Naive thymus-derived CD4-positive, alpha-beta T cell (primary cell): ENCODE measurements at regions of chr19 and their contacts with region 1.

Region 1: GRCh38 chr19:1241417-1242095 is at the start of gene ATP5F1D:
- DNase-seq: peak; percentile 76 to 91 (median 85)
- ATAC-seq: peak; percentile 74
- H3K4me3 ChIP-seq: peak within 1 kb of the TSS; percentile 57
- H3K4me3 Mint-ChIP-seq: peak within 1 kb of the TSS; percentile 86 to 96 (median 90)
- H3K27ac ChIP-seq: peak within 1 kb of the TSS; percentile 82
- H3K27ac Mint-ChIP-seq: peak within 1 kb of the TSS; percentile 81 to 96 (median 93)
- H3K4me1 ChIP-seq: peaks cover 29 to 33% of the 10 kb centered on the region in 2 donors
- H3K4me1 Mint-ChIP-seq: peaks cover 16 to 47% (median 25%) of the 10 kb centered on the region in 7 donors
- H3K27me3 ChIP-seq: no peaks in the 10 kb centered on the region
- H3K27me3 Mint-ChIP-seq: peaks cover 4 to 18% (median 9%) of the 10 kb centered on the region in 5 donors
- total RNA-seq, gene ATP5F1D: 90.6 to 178 (median 102) TPM

Region 2: DNA sequence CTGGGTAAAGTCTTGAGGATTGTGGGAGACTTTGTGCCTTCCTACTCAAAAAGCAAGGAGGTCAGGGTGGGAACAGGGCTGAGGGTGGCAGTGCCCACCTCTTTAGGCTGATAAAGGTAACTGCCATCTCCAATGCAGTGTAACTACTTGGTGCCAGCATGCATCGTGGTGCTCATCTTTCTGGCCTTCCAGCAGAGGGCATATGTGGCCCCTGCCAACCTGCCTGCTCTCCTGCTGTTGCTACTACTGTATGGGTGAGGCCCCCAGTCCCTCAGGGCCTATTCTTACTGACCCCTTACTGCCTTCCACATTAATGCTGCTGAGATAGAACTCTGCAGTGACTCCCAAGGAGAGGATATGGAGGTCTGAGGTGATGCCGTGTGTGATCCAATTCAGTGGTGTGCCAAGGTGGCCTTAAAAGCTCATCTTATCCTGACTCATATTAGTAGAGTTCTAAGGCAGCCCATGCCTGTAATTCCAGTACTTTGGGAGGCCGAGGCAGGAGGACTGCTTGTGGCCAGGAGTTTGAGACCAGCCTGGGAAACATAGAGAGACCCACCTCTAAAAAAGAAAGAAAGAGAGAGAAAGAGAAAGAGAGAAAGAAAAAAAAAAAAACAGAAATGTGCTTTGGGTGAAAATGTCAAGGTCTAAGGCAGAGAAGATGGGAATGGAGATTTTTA is 184.2 kb before region 1 on chr19:
- CTCF ChIA-PET with region 1: no interaction called
- POLR2A ChIA-PET with region 1: interaction called, 3 read pairs
- intact Hi-C with region 1: loop called in 1 of 2 experiments (anchors 1 kb)
- DNase-seq: peak in 4 of 9 donors; percentile 35 to 54 (median 46)
- ATAC-seq: peak; percentile 67
- H3K4me3 ChIP-seq: no peak overlapping the region
- H3K4me3 Mint-ChIP-seq: peak overlapping the region in 6 of 10 donors; percentile 13 to 64 (median 48)
- H3K27ac ChIP-seq: peak overlapping the region; percentile 10
- H3K27ac Mint-ChIP-seq: peak overlapping the region; percentile 28 to 93 (median 79)
- H3K4me1 ChIP-seq: peaks cover 14 to 15% of the 10 kb centered on the region in 2 donors
- H3K4me1 Mint-ChIP-seq: peaks cover 7 to 33% (median 23%) of the 10 kb centered on the region in 7 donors
- H3K27me3 ChIP-seq: no peaks in the 10 kb centered on the region
- H3K27me3 Mint-ChIP-seq: no peaks in the 10 kb centered on the region

Region 3: DNA sequence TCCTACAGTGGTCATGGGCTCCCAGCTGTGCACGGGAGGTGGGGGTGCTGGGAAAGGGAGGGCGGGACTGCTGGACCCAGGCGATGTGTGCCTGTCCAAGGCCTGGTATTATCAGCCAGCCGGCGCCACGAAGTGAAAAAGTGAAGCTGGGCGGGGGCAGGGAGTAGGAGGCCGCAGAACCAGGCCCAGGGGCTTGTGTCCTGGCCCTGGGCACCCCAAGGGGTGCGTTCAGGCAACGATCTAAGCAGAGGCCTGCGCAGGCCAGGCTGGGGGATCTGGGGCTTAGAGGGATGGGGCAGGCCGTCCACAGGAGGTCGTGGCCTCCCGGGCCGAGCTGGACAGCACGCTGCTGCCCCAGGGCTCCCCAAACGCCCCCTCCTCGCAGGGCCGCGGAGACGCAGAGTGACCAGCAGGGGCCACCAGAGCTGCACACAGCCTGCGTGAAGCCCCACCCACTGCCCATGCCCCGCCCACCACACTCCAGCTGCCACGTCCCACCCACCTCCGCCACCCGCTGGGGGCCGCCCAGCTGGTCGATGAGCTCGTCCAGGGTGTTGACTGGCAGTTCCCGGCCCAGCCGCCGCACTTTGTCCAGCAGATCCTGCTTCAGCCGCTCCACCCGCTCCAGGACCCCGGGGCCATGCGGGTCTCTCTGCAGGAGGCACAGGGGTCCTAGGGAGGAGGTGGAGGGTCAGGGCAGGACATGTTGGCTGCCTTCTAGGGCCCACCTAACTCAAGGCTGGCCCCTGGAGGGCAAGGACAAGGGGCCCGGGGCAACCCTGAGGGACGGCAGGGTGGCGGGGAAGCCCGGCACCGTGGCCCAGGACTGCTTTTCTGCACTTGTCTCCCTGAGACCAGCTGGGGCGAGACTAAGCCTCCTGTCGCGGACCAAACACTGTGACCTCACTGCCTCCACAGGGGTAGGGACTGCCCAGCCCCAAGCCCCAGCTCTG is 128.2 kb before region 1 on chr19:
- CTCF ChIA-PET with region 1: interaction called, 6 read pairs
- POLR2A ChIA-PET with region 1: interaction called, 3 read pairs
- intact Hi-C with region 1: loop called in 1 of 2 experiments (anchors 1 kb)
- DNase-seq: peak; percentile 73 to 86 (median 83)
- ATAC-seq: peak; percentile 94
- H3K4me3 ChIP-seq: no peak overlapping the region
- H3K4me3 Mint-ChIP-seq: no peak overlapping the region
- H3K27ac ChIP-seq: peak overlapping the region; percentile 59
- H3K27ac Mint-ChIP-seq: peak overlapping the region in 3 of 9 donors; percentile 36 to 77 (median 74)
- H3K4me1 ChIP-seq: peaks cover 0 to 8% of the 10 kb centered on the region in 2 donors
- H3K4me1 Mint-ChIP-seq: peaks cover 0 to 2% (median 0%) of the 10 kb centered on the region in 7 donors
- H3K27me3 ChIP-seq: no peaks in the 10 kb centered on the region
- H3K27me3 Mint-ChIP-seq: no peaks in the 10 kb centered on the region

Region 4: GRCh38 chr19:1205114-1206062 is 36.2 kb before region 1 on chr19 and contains the start of gene STK11:
- CTCF ChIA-PET with region 1: interaction called, 6 read pairs
- POLR2A ChIA-PET with region 1: interaction called, 4 read pairs
- intact Hi-C with region 1: loop called (anchors 1 kb)
- DNase-seq: peak; percentile 98 to 100 (median 99)
- ATAC-seq: peak; percentile 97
- H3K4me3 ChIP-seq: peak within 1 kb of the TSS; percentile 81
- H3K4me3 Mint-ChIP-seq: peak within 1 kb of the TSS; percentile 92 to 98 (median 94)
- H3K27ac ChIP-seq: peak within 1 kb of the TSS; percentile 74
- H3K27ac Mint-ChIP-seq: peak within 1 kb of the TSS; percentile 85 to 94 (median 88)
- H3K4me1 ChIP-seq: peaks cover 27 to 34% of the 10 kb centered on the region in 2 donors
- H3K4me1 Mint-ChIP-seq: peaks cover 15 to 45% (median 29%) of the 10 kb centered on the region in 7 donors
- H3K27me3 ChIP-seq: no peaks in the 10 kb centered on the region
- H3K27me3 Mint-ChIP-seq: no peaks in the 10 kb centered on the region
- total RNA-seq, gene STK11: 67.7 to 91.3 (median 71.6) TPM

Region 5: GRCh38 chr19:1478934-1479707 is 237.6 kb after region 1 on chr19 and contains the start of gene C19orf25:
- CTCF ChIA-PET with region 1: no interaction called
- POLR2A ChIA-PET with region 1: no interaction called
- intact Hi-C with region 1: no loop called
- DNase-seq: peak; percentile 81 to 94 (median 88)
- ATAC-seq: peak; percentile 98
- H3K4me3 ChIP-seq: peak within 1 kb of the TSS; percentile 82
- H3K4me3 Mint-ChIP-seq: peak within 1 kb of the TSS; percentile 96 to 100 (median 98)
- H3K27ac ChIP-seq: peak within 1 kb of the TSS; percentile 86
- H3K27ac Mint-ChIP-seq: peak within 1 kb of the TSS; percentile 94 to 98 (median 96)
- H3K4me1 ChIP-seq: peaks cover 6 to 12% of the 10 kb centered on the region in 2 donors
- H3K4me1 Mint-ChIP-seq: peaks cover 11 to 24% (median 15%) of the 10 kb centered on the region in 7 donors
- H3K27me3 ChIP-seq: no peaks in the 10 kb centered on the region
- H3K27me3 Mint-ChIP-seq: peaks cover 0 to 3% (median 0%) of the 10 kb centered on the region in 5 donors
- total RNA-seq, gene C19orf25: 24.2 to 64.5 (median 44.6) TPM